B cell (primary cell): ENCODE measurements at regions of chr12 and their contacts with region 1.

Region 1: DNA sequence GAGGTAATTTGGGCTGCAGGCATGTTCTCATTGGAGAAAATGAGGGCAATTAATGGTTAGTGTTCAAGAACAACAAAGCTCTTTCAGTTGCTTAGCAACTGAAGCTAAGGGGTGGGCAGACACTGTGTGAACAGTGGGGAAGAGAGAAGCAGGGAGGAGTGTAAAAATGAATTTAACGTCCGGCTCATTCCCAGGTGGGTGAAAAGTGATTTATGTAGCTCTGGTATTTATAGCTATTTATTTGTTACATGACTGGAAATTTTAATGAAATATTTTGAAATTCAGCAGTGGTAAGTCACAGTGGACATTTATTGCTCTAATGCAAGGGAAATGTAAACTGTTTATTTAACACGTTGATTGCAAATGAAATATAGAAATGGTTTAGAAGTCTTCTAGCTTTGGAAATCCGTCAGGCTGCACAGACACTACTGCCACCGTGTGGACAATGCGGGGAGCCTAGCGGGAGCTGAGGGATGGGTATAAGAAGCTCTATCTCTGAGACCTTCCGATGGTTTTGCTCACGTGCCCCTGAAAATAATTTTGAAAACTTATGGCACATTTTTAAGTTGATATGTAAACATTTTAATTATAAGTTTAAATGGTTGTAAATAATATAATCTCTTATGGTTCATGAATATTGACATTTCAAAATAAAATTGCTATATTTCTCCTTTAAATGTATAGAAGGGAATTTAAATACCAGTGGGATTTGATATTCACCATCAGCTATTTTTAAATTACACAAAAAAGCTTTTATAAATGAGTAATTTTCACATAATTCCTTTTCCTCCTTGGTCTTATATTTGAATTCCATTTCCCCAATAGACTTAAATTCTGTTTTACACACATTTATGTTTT is 54.4 kb downstream of the E2F7 start:
- DNase-seq: peak; percentile 57
- ATAC-seq: peak; percentile 69
- H3K4me3 ChIP-seq: no peak overlapping the region
- H3K4me3 Mint-ChIP-seq: no peak overlapping the region
- H3K27ac ChIP-seq: no peak overlapping the region
- H3K27ac Mint-ChIP-seq: no peak overlapping the region
- H3K4me1 ChIP-seq: no peaks in the 10 kb centered on the region
- H3K4me1 Mint-ChIP-seq: peaks cover 3% of the 10 kb centered on the region
- H3K27me3 ChIP-seq: peaks cover 0 to 3% (median 0%) of the 10 kb centered on the region in 4 experiments
- H3K27me3 Mint-ChIP-seq: peaks cover 16% of the 10 kb centered on the region
- CTCF ChIP-seq: peak; percentile 99

Region 2: GRCh38 chr12:77031745-77032144 is 20.8 kb after region 1 on chr12:
- CTCF ChIA-PET with region 1: interaction called, 10 read pairs
- POLR2A ChIA-PET with region 1: no interaction called
- intact Hi-C with region 1: no loop called
- DNase-seq: no peak
- ATAC-seq: no peak
- H3K4me3 ChIP-seq: no peak overlapping the region
- H3K4me3 Mint-ChIP-seq: no peak overlapping the region
- H3K27ac ChIP-seq: no peak overlapping the region
- H3K27ac Mint-ChIP-seq: no peak overlapping the region
- H3K4me1 ChIP-seq: no peaks in the 10 kb centered on the region
- H3K4me1 Mint-ChIP-seq: no peaks in the 10 kb centered on the region
- H3K27me3 ChIP-seq: no peaks in the 10 kb centered on the region
- H3K27me3 Mint-ChIP-seq: no peaks in the 10 kb centered on the region
- CTCF ChIP-seq: no peak